ENCODE measurements at regions of chr1 and their contacts with region 1.

Region 1: GRCh38 chr1:179365320-179366092 is at the start of gene AXDND1:
- DNase-seq: peak; percentile 80 to 91 (median 84)
- ATAC-seq: peak; percentile 94
- H3K4me3 ChIP-seq: peak within 1 kb of the TSS; percentile 8 to 60
- H3K27ac ChIP-seq: peak within 1 kb of the TSS; percentile 70 to 95 (median 82)
- H3K4me1 ChIP-seq: peaks cover 9% of the 10 kb centered on the region
- H3K27me3 ChIP-seq: no peaks in the 10 kb centered on the region
- CTCF ChIP-seq: no peak
- POLR2A ChIP-seq: peak in 2 of 3 donors; percentile 70
- total RNA-seq, gene AXDND1: 3.6 TPM in 1 of 2 donors, not detected in the other

Region 2: GRCh38 chr1:178953034-178953433 is 412.5 kb before region 1 on chr1:
- intact Hi-C with region 1: no loop called
- DNase-seq: no peak
- ATAC-seq: no peak
- H3K4me3 ChIP-seq: no peak overlapping the region
- H3K27ac ChIP-seq: peak overlapping the region in 3 of 4 donors; percentile 10 to 30 (median 22)
- H3K4me1 ChIP-seq: peaks cover 18% of the 10 kb centered on the region
- H3K27me3 ChIP-seq: no peaks in the 10 kb centered on the region
- CTCF ChIP-seq: no peak
- POLR2A ChIP-seq: no peak

Region 3: GRCh38 chr1:179081687-179082332 is 283.7 kb before region 1 on chr1 and contains the start of gene TOR3A:
- intact Hi-C with region 1: loop called (anchors 10 kb)
- DNase-seq: peak; percentile 93 to 96 (median 95)
- ATAC-seq: peak; percentile 94
- H3K4me3 ChIP-seq: peak within 1 kb of the TSS; percentile 71 to 74
- H3K27ac ChIP-seq: peak within 1 kb of the TSS; percentile 78 to 91 (median 82)
- H3K4me1 ChIP-seq: peaks cover 25% of the 10 kb centered on the region
- H3K27me3 ChIP-seq: no peaks in the 10 kb centered on the region
- CTCF ChIP-seq: no peak
- POLR2A ChIP-seq: peak; percentile 86 to 92 (median 90)
- total RNA-seq, gene TOR3A: 23.1 to 27.7 TPM

Region 4: DNA sequence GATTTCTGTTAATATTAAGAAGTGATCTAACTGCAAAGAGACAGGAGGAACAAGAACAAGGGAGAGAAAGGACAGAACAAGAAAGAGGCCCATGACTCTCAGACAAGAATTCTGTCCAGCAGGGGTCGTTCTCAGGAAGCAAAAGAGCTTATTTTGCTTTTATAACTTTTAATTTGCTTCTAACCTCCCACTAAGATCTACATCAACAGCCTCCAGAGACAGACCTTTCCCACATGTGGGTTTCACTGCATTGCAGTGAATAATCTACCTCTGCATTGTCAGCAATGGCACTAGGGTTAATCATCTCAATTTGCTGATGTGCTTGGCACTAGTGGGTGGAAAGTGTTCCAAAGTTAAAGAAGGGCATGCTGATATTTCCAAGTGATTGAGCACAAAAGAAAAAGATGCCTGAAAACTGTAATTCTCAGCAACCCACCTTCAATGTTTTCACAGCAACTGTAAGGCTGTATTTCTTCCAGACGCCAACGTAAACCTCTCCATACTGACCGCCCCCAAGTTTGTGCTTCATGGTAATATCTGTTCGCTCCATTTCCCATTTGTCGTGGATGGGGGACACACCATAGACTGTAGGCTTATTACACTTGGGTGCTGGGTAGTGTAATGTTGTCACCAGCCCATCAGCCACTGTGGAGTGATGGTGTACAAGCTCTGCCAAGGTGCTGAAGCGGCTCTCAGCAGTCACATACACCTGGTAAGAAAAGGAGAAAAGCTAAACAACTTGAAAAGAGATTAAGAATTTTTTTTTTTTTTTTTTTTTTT is 244.2 kb before region 1 on chr1:
- intact Hi-C with region 1: no loop called
- DNase-seq: peak in 2 of 4 donors; percentile 35 to 44
- ATAC-seq: no peak
- H3K4me3 ChIP-seq: no peak overlapping the region
- H3K27ac ChIP-seq: no peak overlapping the region
- H3K4me1 ChIP-seq: no peaks in the 10 kb centered on the region
- H3K27me3 ChIP-seq: no peaks in the 10 kb centered on the region
- CTCF ChIP-seq: peak; percentile 14 to 55 (median 39)
- POLR2A ChIP-seq: no peak

Region 5: GRCh38 chr1:179229214-179230140 is 136.0 kb before region 1 on chr1 and contains the start of gene ABL2:
- intact Hi-C with region 1: no loop called
- DNase-seq: peak; percentile 47 to 78 (median 68)
- ATAC-seq: peak; percentile 80
- H3K4me3 ChIP-seq: peak within 1 kb of the TSS; percentile 97 to 98
- H3K27ac ChIP-seq: peak within 1 kb of the TSS; percentile 69 to 89 (median 80)
- H3K4me1 ChIP-seq: peaks cover 25% of the 10 kb centered on the region
- H3K27me3 ChIP-seq: no peaks in the 10 kb centered on the region
- CTCF ChIP-seq: no peak
- POLR2A ChIP-seq: peak; percentile 16 to 46 (median 45)
- total RNA-seq, gene ABL2: 10.1 to 12.5 TPM

Region 6: GRCh38 chr1:179251675-179252074 is 113.8 kb before region 1 on chr1:
- intact Hi-C with region 1: loop called (anchors 5 kb)
- DNase-seq: peak in 2 of 4 donors; percentile 14 to 38
- ATAC-seq: peak; percentile 84
- H3K4me3 ChIP-seq: no peak overlapping the region
- H3K27ac ChIP-seq: no peak overlapping the region
- H3K4me1 ChIP-seq: no peaks in the 10 kb centered on the region
- H3K27me3 ChIP-seq: no peaks in the 10 kb centered on the region
- CTCF ChIP-seq: peak; percentile 44 to 88 (median 83)
- POLR2A ChIP-seq: no peak

Region 7: DNA sequence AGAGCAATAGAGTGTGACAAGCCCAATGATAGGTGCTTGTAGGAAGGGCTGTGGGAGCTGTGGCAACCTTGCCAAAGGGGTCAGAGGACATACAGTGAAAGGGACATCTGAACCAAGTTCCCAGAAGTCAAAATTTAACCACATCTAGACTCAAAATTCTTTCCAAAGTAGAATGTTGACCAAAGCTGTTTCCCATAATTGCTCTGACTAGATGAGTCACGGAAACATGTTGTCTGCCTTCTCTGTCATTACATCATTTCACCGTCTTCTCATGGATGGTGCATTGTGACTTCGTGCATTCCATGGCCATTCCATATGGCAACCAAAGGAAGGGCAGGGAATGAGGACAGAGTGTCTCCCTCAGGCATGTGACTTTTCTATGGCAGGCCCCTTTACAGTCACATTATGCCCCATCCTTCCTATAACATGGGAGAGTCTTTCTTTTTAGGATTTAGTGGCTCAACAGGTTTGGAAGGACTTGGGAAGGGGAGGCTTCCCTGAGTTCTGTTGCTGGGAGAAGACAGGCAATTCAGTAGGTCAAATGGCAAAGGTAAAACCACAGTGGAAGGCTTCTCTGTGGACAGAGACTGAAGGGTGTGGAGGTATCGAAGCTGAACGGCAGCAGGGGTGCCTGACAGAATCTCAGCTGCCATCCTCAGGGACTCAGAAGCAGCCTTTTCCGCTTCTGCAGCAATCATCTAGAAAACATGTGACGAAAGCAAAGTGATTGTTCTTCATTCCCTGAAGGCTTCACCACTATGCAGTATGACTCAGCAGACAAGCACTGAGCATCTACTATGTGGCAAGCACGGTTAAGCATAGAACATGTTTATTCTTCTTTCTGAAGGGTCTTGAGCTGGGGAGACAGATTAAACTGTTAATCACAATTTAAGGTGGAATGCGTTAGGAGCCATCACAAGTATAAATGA is 185.5 kb after region 1 on chr1:
- intact Hi-C with region 1: no loop called
- DNase-seq: no peak
- ATAC-seq: no peak
- H3K4me3 ChIP-seq: no peak overlapping the region
- H3K27ac ChIP-seq: no peak overlapping the region
- H3K4me1 ChIP-seq: peaks cover 5% of the 10 kb centered on the region
- H3K27me3 ChIP-seq: no peaks in the 10 kb centered on the region
- CTCF ChIP-seq: no peak
- POLR2A ChIP-seq: no peak

Measured in body of pancreas (tissue), 4 donors.